Activated B cell treated with CpG ODN at 0.5 μM for 24 hours (primary cell): ENCODE measurements at regions of chr5 and their contacts with region 1.

Region 1: DNA sequence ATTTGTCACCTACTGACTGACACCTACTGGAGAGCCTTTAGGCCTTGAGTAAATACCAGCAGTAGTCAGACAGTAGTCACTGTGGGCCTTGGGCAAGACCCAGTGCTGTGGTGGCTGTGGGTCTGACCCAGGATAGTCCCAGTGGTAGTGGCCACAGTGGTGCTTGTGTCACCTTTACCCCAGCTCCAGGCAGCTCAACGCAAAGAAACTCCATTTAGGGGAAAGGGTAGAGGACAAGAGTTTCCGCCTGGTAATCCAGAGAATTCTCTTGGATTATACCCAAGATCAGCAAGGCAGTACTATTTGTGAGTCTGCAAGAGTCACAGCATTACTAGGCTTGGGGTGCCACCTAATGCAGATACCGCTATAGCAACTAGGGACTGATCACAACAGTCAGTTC is 28.9 kb downstream of the CERT1 start:
- DNase-seq: no peak
- ATAC-seq: no peak
- H3K4me3 Mint-ChIP-seq: no peak overlapping the region
- H3K27ac Mint-ChIP-seq: no peak overlapping the region
- H3K4me1 Mint-ChIP-seq: peaks cover 13% of the 10 kb centered on the region
- H3K27me3 Mint-ChIP-seq: no peaks in the 10 kb centered on the region
- CTCF ChIP-seq: no peak

Region 2: DNA sequence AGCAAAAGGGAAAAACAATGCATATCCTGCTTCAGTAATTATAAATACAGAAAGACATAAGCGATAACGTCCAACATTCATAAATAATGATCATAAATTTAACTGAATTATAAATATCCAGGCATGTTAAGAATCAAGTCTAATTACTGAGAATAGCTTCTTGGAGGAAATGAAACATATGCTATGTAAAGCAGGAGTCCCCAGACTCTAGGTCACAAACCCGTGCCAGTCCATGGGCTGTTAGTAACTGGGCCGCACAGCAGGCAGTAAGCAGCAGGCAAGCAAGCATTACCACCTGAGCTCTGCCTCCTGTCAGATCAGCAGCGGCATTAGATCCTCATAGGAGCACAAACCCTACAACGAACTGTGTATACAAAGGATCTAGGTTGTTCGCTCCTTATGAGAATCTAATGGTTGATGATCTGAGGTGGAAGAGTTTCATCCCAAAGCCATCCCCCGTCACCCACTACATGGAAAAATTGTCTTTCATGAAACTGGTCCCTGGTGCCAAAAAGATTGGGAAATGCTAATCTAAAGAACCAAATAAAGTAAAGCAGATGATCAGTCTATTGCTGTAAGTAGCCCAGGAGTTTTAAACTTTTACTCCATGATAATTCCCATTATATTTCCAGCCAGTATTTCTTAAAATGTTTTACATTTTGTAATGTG is 21.4 kb before region 1 on chr5:
- CTCF ChIA-PET with region 1: no interaction called
- POLR2A ChIA-PET with region 1: no interaction called
- intact Hi-C with region 1: no loop called
- DNase-seq: no peak
- ATAC-seq: peak; percentile 94
- H3K4me3 Mint-ChIP-seq: peak overlapping the region; percentile 15
- H3K27ac Mint-ChIP-seq: peak overlapping the region; percentile 7
- H3K4me1 Mint-ChIP-seq: peaks cover 50% of the 10 kb centered on the region
- H3K27me3 Mint-ChIP-seq: no peaks in the 10 kb centered on the region
- CTCF ChIP-seq: no peak

Region 3: GRCh38 chr5:75496026-75496425 is 13.5 kb after region 1 on chr5:
- CTCF ChIA-PET with region 1: no interaction called
- POLR2A ChIA-PET with region 1: no interaction called
- intact Hi-C with region 1: loop called (anchors 2 kb)
- DNase-seq: no peak
- ATAC-seq: no peak
- H3K4me3 Mint-ChIP-seq: no peak overlapping the region
- H3K27ac Mint-ChIP-seq: no peak overlapping the region
- H3K4me1 Mint-ChIP-seq: peaks cover 2% of the 10 kb centered on the region
- H3K27me3 Mint-ChIP-seq: no peaks in the 10 kb centered on the region
- CTCF ChIP-seq: no peak

Region 4: DNA sequence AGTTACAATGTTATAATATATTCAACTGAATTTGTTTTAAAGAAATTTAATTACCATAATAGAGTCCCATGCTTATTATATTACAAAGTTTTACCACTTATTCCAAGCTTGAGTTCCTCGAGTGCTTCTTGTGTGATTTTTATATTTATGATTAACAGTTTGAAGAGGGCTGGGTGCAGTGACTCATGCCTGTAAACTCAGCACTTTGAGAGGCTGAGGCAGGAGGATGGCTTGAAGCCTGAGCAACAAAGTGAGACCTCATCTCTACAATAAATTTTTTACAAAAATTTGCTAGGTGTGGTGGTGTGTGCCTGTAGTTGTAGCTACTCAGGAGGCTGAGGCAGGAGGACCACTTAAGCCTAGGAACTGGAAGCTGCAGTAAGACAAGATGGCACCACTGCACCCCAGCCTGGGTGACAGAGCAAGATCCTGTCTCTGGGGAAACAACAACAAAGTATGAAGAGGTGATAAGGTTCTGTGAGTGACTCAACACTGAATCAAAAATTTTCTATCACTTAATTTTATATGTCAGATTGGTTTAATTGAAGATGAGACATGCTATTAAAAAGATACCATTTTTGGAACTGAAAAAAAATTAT is 225.5 kb after region 1 on chr5:
- CTCF ChIA-PET with region 1: no interaction called
- POLR2A ChIA-PET with region 1: interaction called, 11 read pairs
- intact Hi-C with region 1: no loop called
- DNase-seq: no peak
- ATAC-seq: no peak
- H3K4me3 Mint-ChIP-seq: no peak overlapping the region
- H3K27ac Mint-ChIP-seq: no peak overlapping the region
- H3K4me1 Mint-ChIP-seq: peaks cover 4% of the 10 kb centered on the region
- H3K27me3 Mint-ChIP-seq: no peaks in the 10 kb centered on the region
- CTCF ChIP-seq: no peak

Region 5: DNA sequence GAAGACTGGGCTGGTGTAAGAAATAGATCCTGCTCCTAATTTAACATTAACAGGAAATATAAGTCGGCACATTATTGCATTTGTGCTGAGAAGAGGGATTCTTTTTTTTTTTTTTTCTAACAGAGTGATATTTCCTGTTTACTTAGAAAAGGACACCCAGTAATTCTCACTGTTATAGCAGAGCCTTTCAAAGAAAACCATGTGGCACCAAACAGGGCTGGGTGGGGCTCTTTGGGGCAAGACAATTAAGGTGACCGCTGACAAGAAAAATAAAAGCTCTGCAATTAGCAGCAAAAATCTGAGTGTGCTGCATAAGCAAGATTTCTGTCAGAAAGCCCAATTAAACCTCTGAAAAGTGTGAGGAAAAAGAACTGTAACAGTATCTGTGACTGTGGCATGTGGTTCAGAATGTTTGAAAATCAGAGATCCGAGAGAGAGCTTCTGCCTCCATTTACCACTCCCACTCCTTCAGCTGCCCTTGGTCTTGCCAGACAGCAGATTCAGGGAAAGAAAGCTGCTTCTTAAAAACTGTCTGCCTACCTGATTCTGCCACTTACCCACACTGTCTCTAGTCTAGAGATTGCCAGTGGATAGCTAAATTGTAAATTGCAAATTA is 843.5 kb after region 1 on chr5:
- CTCF ChIA-PET with region 1: no interaction called
- POLR2A ChIA-PET with region 1: no interaction called
- intact Hi-C with region 1: no loop called
- DNase-seq: no peak
- ATAC-seq: no peak
- H3K4me3 Mint-ChIP-seq: no peak overlapping the region
- H3K27ac Mint-ChIP-seq: no peak overlapping the region
- H3K4me1 Mint-ChIP-seq: peaks cover 5% of the 10 kb centered on the region
- H3K27me3 Mint-ChIP-seq: peaks cover 2% of the 10 kb centered on the region
- CTCF ChIP-seq: no peak